Pancreas (tissue), 10 donors: ENCODE measurements at regions of chr7 and their contacts with region 1.

Region 1: GRCh38 chr7:141381794-141382453 is 169.3 kb upstream of the AGK start:
- DNase-seq: no peak
- ATAC-seq: peak in 2 of 4 donors; percentile 59 to 72
- H3K4me3 ChIP-seq: no peak overlapping the region
- H3K27ac ChIP-seq: no peak overlapping the region
- H3K4me1 ChIP-seq: no peaks in the 10 kb centered on the region
- H3K27me3 ChIP-seq: no peaks in the 10 kb centered on the region
- CTCF ChIP-seq: no peak

Region 2: GRCh38 chr7:141441837-141442627 is 60.1 kb after region 1 on chr7:
- intact Hi-C with region 1: loop called in 1 of 3 experiments (anchors 10 kb)
- DNase-seq: no peak
- ATAC-seq: no peak
- H3K4me3 ChIP-seq: no peak overlapping the region
- H3K27ac ChIP-seq: no peak overlapping the region
- H3K4me1 ChIP-seq: no peaks in the 10 kb centered on the region
- H3K27me3 ChIP-seq: no peaks in the 10 kb centered on the region
- CTCF ChIP-seq: no peak

Region 3: GRCh38 chr7:141641876-141642275 is 260.0 kb after region 1 on chr7:
- intact Hi-C with region 1: no loop called
- DNase-seq: no peak
- ATAC-seq: no peak
- H3K4me3 ChIP-seq: no peak overlapping the region
- H3K27ac ChIP-seq: no peak overlapping the region
- H3K4me1 ChIP-seq: no peaks in the 10 kb centered on the region
- H3K27me3 ChIP-seq: no peaks in the 10 kb centered on the region
- CTCF ChIP-seq: no peak